Endothelial cell of umbilical vein (primary cell): ENCODE measurements at regions of chr13 and their contacts with region 1.

Region 1: GRCh38 chr13:76473552-76474134 is 412.6 kb downstream of the KCTD12 start:
- DNase-seq: peak; percentile 85
- H3K4me3 ChIP-seq: no peak overlapping the region
- H3K27ac ChIP-seq: no peak overlapping the region
- H3K4me1 ChIP-seq: no peaks in the 10 kb centered on the region
- H3K27me3 ChIP-seq: peaks cover 2% of the 10 kb centered on the region in 2 experiments
- CTCF ChIP-seq: peak; percentile 67 to 68
- POLR2A ChIP-seq: no peak

Region 2: DNA sequence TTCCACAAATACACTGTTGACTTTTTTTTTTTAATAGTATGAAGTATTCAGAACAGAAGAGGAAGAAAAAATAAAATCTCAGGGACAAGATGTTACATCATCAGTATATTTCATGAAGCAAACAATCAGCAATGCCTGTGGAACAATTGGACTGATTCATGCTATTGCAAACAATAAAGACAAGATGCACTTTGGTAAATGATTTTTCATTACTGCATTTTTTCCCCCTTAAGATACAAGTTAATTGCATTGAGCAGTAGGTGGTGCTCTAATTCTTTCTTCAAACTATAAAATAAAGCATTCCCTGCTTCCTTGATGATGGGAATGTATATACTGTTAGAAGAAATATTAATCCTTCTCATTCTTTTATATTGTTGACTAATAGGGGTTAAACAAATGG is 907.0 kb before region 1 on chr13:
- CTCF ChIA-PET with region 1: no interaction called
- POLR2A ChIA-PET with region 1: no interaction called
- dilution Hi-C with region 1: no loop called
- intact Hi-C with region 1: loop called (anchors 2 kb)
- DNase-seq: peak; percentile 46
- H3K4me3 ChIP-seq: no peak overlapping the region
- H3K27ac ChIP-seq: no peak overlapping the region
- H3K4me1 ChIP-seq: no peaks in the 10 kb centered on the region
- H3K27me3 ChIP-seq: no peaks in the 10 kb centered on the region
- CTCF ChIP-seq: peak in 1 of 2 donors; percentile 22
- POLR2A ChIP-seq: no peak

Region 3: GRCh38 chr13:75870397-75870903 is 603.2 kb before region 1 on chr13:
- CTCF ChIA-PET with region 1: interaction called, 76 read pairs
- POLR2A ChIA-PET with region 1: no interaction called
- dilution Hi-C with region 1: no loop called
- intact Hi-C with region 1: no loop called
- DNase-seq: peak; percentile 36
- H3K4me3 ChIP-seq: peak overlapping the region; percentile 28 to 74 (median 37)
- H3K27ac ChIP-seq: no peak overlapping the region
- H3K4me1 ChIP-seq: peaks cover 4% of the 10 kb centered on the region
- H3K27me3 ChIP-seq: peaks cover 0 to 2% of the 10 kb centered on the region in 2 experiments
- CTCF ChIP-seq: peak; percentile 58 to 59
- POLR2A ChIP-seq: no peak

Region 4: GRCh38 chr13:76016799-76017400 is 456.7 kb before region 1 on chr13:
- CTCF ChIA-PET with region 1: no interaction called
- POLR2A ChIA-PET with region 1: no interaction called
- dilution Hi-C with region 1: no loop called
- intact Hi-C with region 1: loop called (anchors 5 kb)
- DNase-seq: peak; percentile 52
- H3K4me3 ChIP-seq: no peak overlapping the region
- H3K27ac ChIP-seq: no peak overlapping the region
- H3K4me1 ChIP-seq: no peaks in the 10 kb centered on the region
- H3K27me3 ChIP-seq: peaks cover 0 to 2% of the 10 kb centered on the region in 2 experiments
- CTCF ChIP-seq: peak; percentile 44 to 53
- POLR2A ChIP-seq: no peak

Region 5: DNA sequence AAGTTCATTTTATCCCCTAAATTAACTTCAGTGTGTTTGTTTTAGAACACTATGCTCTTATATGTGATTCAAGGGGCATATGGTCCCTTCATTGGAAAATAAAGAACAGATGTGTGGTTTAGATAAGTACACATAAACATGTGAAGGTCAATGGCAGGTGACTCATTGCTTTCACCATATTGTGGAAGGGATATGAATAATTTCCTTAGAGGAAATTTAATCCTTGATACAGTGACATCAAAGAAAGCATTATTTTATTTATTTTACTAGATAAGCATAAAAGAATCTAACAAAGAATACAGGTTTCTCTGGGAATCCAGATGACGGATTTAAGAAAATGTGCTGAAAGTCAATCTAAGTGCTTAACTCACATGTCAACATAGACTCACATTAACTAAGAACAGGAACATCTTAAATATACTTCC is 39.1 kb after region 1 on chr13:
- CTCF ChIA-PET with region 1: interaction called, 3 read pairs
- POLR2A ChIA-PET with region 1: no interaction called
- dilution Hi-C with region 1: no loop called
- intact Hi-C with region 1: loop called (anchors 2 kb)
- DNase-seq: peak; percentile 98
- H3K4me3 ChIP-seq: no peak overlapping the region
- H3K27ac ChIP-seq: peak overlapping the region; percentile 89
- H3K4me1 ChIP-seq: peaks cover 49% of the 10 kb centered on the region
- H3K27me3 ChIP-seq: no peaks in the 10 kb centered on the region
- CTCF ChIP-seq: no peak
- POLR2A ChIP-seq: peak; percentile 90